ENCODE measurements at regions of chr2 and their contacts with region 1.

Region 1: GRCh38 chr2:74867841-74868658 is 34.1 kb downstream of the HK2 start:
- DNase-seq: peak; percentile 40 to 71
- H3K4me3 ChIP-seq: no peak overlapping the region
- H3K4me3 Mint-ChIP-seq: no peak overlapping the region
- H3K27ac Mint-ChIP-seq: peak overlapping the region; percentile 29
- H3K4me1 ChIP-seq: peaks cover 53% of the 10 kb centered on the region
- H3K4me1 Mint-ChIP-seq: peaks cover 41% of the 10 kb centered on the region
- H3K27me3 ChIP-seq: no peaks in the 10 kb centered on the region
- H3K27me3 Mint-ChIP-seq: no peaks in the 10 kb centered on the region
- CTCF ChIP-seq: no peak

Region 2: DNA sequence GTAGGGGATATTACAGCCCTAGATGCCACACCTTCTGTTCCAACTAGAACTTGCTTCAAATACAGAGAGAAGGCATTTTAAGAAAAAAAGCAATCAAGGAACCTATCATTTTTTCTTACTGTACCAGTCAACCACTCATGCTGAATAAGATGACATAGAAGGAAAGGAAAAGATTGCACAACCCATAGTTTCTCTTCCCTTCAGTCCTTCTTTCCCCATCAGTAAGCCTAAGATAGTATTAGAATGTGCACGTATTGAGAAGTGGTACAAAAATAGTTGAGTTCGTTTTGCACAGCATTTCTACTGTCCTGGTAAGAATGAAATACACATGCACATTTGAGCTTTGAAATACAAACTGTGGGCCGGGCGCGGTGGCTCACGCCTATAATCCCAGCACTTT is 61.1 kb before region 1 on chr2:
- CTCF ChIA-PET with region 1: no interaction called
- POLR2A ChIA-PET with region 1: no interaction called
- intact Hi-C with region 1: no loop called
- DNase-seq: no peak
- H3K4me3 ChIP-seq: no peak overlapping the region
- H3K4me3 Mint-ChIP-seq: no peak overlapping the region
- H3K27ac Mint-ChIP-seq: no peak overlapping the region
- H3K4me1 ChIP-seq: peaks cover 7% of the 10 kb centered on the region; the same call in 1 of the 2 replicates
- H3K4me1 Mint-ChIP-seq: peaks cover 18% of the 10 kb centered on the region
- H3K27me3 ChIP-seq: no peaks in the 10 kb centered on the region
- H3K27me3 Mint-ChIP-seq: no peaks in the 10 kb centered on the region
- CTCF ChIP-seq: no peak

Region 3: GRCh38 chr2:74849228-74849892 is 18.7 kb before region 1 on chr2:
- CTCF ChIA-PET with region 1: no interaction called
- POLR2A ChIA-PET with region 1: no interaction called
- intact Hi-C with region 1: loop called (anchors 2 kb)
- DNase-seq: no peak
- H3K4me3 ChIP-seq: no peak overlapping the region
- H3K4me3 Mint-ChIP-seq: no peak overlapping the region
- H3K27ac Mint-ChIP-seq: no peak overlapping the region
- H3K4me1 ChIP-seq: peaks cover 56% of the 10 kb centered on the region
- H3K4me1 Mint-ChIP-seq: peaks cover 50% of the 10 kb centered on the region
- H3K27me3 ChIP-seq: no peaks in the 10 kb centered on the region
- H3K27me3 Mint-ChIP-seq: no peaks in the 10 kb centered on the region
- CTCF ChIP-seq: no peak

Region 4: DNA sequence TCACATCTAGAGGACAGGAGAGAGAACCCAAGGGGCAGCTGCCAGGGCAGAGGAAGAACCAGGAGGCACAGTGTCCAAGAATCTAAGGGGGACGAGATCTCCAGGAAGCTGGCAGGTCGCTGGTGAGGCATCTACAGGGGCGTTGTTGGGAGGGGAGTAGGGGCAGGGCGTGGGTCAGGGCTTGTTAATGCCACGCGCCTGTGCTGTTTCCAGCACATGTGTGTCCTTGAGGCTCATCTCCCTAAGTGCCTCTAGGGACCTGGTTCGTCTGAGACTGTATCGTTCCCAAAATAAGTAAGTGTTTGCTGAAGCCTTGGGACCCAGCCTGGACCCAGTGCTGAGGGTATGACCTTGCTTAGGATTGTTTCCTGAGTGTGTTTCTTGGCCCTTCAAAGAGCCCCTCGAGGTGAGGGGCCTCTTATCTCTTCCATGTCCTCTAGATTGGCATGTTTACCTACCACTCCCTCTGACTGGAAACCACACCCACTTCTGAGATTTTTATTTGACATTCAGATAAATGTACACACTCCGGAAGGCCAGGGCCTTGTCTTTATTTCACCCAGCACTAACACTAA is 12.0 kb before region 1 on chr2:
- CTCF ChIA-PET with region 1: no interaction called
- POLR2A ChIA-PET with region 1: no interaction called
- intact Hi-C with region 1: loop called (anchors 1 kb)
- DNase-seq: peak; percentile 71 to 80
- H3K4me3 ChIP-seq: no peak overlapping the region
- H3K4me3 Mint-ChIP-seq: peak overlapping the region; percentile 10
- H3K27ac Mint-ChIP-seq: peak overlapping the region; percentile 77
- H3K4me1 ChIP-seq: peaks cover 40% of the 10 kb centered on the region
- H3K4me1 Mint-ChIP-seq: peaks cover 48% of the 10 kb centered on the region
- H3K27me3 ChIP-seq: no peaks in the 10 kb centered on the region
- H3K27me3 Mint-ChIP-seq: no peaks in the 10 kb centered on the region
- CTCF ChIP-seq: no peak